T-cell (primary cell): ENCODE measurements at regions of chr15 and their contacts with region 1.

Region 1: DNA sequence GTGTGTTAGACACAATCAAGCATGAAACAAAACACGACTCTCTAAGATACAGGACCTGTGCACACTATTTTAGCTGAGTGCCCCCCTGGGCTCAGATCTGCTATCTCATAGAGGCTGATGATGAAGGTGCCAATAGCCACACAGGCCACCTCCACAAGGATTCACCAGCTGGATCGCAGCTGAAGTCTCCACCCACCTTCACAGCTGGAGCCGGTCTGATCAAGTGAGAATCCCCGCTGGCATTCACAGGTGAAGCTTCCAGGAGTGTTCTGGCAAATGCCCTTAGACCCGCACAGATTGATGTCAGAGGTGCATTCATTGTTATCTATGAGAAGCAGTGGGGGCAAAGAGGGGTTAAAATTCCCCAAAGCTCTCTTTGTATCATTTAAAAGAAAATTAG is 90.1 kb downstream of the DUT start:
- DNase-seq: no peak
- ATAC-seq: no peak
- H3K4me3 ChIP-seq: no peak overlapping the region
- H3K4me3 Mint-ChIP-seq: no peak overlapping the region
- H3K27ac ChIP-seq: no peak overlapping the region
- H3K27ac Mint-ChIP-seq: no peak overlapping the region
- H3K4me1 ChIP-seq: no peaks in the 10 kb centered on the region
- H3K4me1 Mint-ChIP-seq: no peaks in the 10 kb centered on the region
- H3K27me3 ChIP-seq: no peaks in the 10 kb centered on the region
- H3K27me3 Mint-ChIP-seq: peaks cover 0 to 3% of the 10 kb centered on the region in 2 donors

Region 2: GRCh38 chr15:46723308-46723707 is 1698.1 kb before region 1 on chr15:
- CTCF ChIA-PET with region 1: interaction called in 1 of 2 experiments, 11 read pairs
- POLR2A ChIA-PET with region 1: no interaction called
- DNase-seq: no peak
- ATAC-seq: no peak
- H3K4me3 ChIP-seq: no peak overlapping the region
- H3K4me3 Mint-ChIP-seq: no peak overlapping the region
- H3K27ac ChIP-seq: no peak overlapping the region
- H3K27ac Mint-ChIP-seq: no peak overlapping the region
- H3K4me1 ChIP-seq: no peaks in the 10 kb centered on the region
- H3K4me1 Mint-ChIP-seq: no peaks in the 10 kb centered on the region
- H3K27me3 ChIP-seq: no peaks in the 10 kb centered on the region
- H3K27me3 Mint-ChIP-seq: no peaks in the 10 kb centered on the region